CD8-positive, alpha-beta T cell (primary cell): ENCODE measurements at regions of chr1 and their contacts with region 1.

Region 1: GRCh38 chr1:192496371-192497056 is 79.1 kb upstream of the RGS1 start:
- DNase-seq: no peak
- ATAC-seq: no peak
- H3K4me3 ChIP-seq: no peak overlapping the region
- H3K4me3 Mint-ChIP-seq: no peak overlapping the region
- H3K27ac ChIP-seq: no peak overlapping the region
- H3K27ac Mint-ChIP-seq: no peak overlapping the region
- H3K4me1 ChIP-seq: no peaks in the 10 kb centered on the region
- H3K4me1 Mint-ChIP-seq: no peaks in the 10 kb centered on the region
- H3K27me3 ChIP-seq: no peaks in the 10 kb centered on the region
- H3K27me3 Mint-ChIP-seq: no peaks in the 10 kb centered on the region
- CTCF ChIP-seq: no peak

Region 2: DNA sequence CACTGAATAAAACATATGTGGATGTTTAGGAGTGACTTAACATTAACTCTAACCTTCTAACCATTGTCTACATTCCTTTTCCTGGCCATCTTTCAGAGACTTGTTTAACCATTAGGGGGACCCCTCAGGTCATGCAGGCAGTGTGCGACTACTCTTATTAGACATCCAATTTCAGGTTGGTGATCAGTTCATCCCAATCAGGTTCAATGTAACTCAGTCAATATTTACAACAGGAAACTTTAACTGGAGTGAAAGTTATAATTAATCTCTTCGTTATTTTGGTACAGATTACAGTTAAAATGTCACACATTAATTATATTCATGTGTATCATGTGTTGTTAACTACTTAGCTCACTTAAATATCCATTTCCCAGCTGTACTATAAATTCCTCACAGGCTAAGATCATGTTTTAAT is 10.2 kb after region 1 on chr1:
- CTCF ChIA-PET with region 1: no interaction called
- POLR2A ChIA-PET with region 1: no interaction called
- intact Hi-C with region 1: loop called in 1 of 2 experiments (anchors 1 kb)
- DNase-seq: peak in 2 of 9 experiments; percentile 50 to 59
- ATAC-seq: no peak
- H3K4me3 ChIP-seq: no peak overlapping the region
- H3K4me3 Mint-ChIP-seq: no peak overlapping the region
- H3K27ac ChIP-seq: no peak overlapping the region
- H3K27ac Mint-ChIP-seq: no peak overlapping the region
- H3K4me1 ChIP-seq: no peaks in the 10 kb centered on the region
- H3K4me1 Mint-ChIP-seq: no peaks in the 10 kb centered on the region
- H3K27me3 ChIP-seq: no peaks in the 10 kb centered on the region
- H3K27me3 Mint-ChIP-seq: no peaks in the 10 kb centered on the region
- CTCF ChIP-seq: no peak